Ovary (tissue), 10 donors: ENCODE measurements at regions of chr11 and their contacts with region 1.

Region 1: DNA sequence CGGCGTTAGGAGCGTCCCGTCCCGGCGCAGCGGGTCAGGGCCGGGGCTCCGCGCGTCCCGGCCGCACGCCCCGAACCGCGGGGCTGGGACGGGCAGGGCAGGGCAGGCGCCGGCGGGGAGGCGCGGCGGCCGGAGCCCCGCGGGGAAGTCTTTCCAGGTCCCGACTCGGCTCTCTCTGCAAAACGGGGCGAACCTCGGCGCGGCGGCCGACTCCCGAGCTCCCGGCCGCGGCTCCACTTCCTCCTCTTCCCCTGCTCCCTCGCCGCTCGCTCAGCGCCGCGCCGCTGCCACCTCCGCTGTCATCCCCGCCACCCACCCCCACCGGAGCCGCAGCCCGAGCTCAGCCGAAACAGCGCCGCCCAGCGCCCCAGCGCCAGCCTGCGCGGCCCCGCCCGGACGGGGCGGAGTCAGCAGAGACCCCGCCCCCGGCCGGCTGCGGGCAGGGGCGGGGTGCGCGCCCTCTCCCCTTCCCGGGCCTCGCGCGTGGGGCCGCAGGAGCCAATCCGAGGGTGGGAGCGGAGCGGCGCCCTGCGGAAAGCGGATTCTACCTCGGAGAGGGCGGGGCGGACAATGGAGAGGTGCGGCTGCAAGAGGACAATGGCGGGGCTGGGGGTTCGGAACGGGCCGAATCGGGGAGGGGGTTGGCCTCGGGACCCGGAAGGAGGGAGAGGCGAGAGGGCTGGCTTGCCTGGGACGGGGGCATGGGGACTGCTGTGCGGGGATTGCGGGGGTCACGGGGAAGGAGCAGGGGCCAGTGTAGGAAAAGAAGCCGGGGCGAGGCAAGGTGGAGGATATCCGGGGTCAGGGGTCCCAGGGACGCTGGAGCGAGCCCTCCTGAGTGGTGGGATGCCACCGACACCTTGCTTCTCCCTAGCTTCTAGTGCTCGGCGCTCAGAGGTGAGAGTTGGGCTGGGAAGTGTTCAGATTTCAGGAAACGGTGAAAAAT is at the start of gene GDPD5:
- DNase-seq: peak; percentile 80 to 89 (median 86)
- H3K4me3 ChIP-seq: peak within 1 kb of the TSS; percentile 64
- H3K27ac ChIP-seq: no peak within 1 kb of the TSS
- H3K4me1 ChIP-seq: peaks cover 3% of the 10 kb centered on the region
- H3K27me3 ChIP-seq: no peaks in the 10 kb centered on the region
- CTCF ChIP-seq: peak in 2 of 3 donors; percentile 47 to 50
- EP300 ChIP-seq: no peak
- POLR2A ChIP-seq: no peak
- total RNA-seq, gene GDPD5: 3.8 to 15.8 (median 8.4) TPM

Region 2: GRCh38 chr11:75388386-75389275 is 137.2 kb before region 1 on chr11:
- intact Hi-C with region 1: loop called in 3 of 4 experiments (anchors 5 to 10 kb)
- DNase-seq: peak; percentile 55 to 74 (median 72)
- H3K4me3 ChIP-seq: no peak overlapping the region
- H3K27ac ChIP-seq: no peak overlapping the region
- H3K4me1 ChIP-seq: no peaks in the 10 kb centered on the region
- H3K27me3 ChIP-seq: no peaks in the 10 kb centered on the region
- CTCF ChIP-seq: peak; percentile 61 to 72 (median 68)
- EP300 ChIP-seq: no peak
- POLR2A ChIP-seq: no peak

Region 3: GRCh38 chr11:75399344-75400145 is 126.3 kb before region 1 on chr11 and contains the start of gene RPS3:
- intact Hi-C with region 1: loop called in 2 of 4 experiments (anchors 5 kb)
- DNase-seq: peak; percentile 90 to 93 (median 90)
- H3K4me3 ChIP-seq: peak within 1 kb of the TSS; percentile 74
- H3K27ac ChIP-seq: peak within 1 kb of the TSS; percentile 54 to 76
- H3K4me1 ChIP-seq: peaks cover 4% of the 10 kb centered on the region
- H3K27me3 ChIP-seq: no peaks in the 10 kb centered on the region
- CTCF ChIP-seq: peak in 1 of 3 donors; percentile 27
- EP300 ChIP-seq: no peak
- POLR2A ChIP-seq: peak; percentile 88
- total RNA-seq, gene RPS3: 4,127 to 7,276 (median 5,342) TPM

Region 4: DNA sequence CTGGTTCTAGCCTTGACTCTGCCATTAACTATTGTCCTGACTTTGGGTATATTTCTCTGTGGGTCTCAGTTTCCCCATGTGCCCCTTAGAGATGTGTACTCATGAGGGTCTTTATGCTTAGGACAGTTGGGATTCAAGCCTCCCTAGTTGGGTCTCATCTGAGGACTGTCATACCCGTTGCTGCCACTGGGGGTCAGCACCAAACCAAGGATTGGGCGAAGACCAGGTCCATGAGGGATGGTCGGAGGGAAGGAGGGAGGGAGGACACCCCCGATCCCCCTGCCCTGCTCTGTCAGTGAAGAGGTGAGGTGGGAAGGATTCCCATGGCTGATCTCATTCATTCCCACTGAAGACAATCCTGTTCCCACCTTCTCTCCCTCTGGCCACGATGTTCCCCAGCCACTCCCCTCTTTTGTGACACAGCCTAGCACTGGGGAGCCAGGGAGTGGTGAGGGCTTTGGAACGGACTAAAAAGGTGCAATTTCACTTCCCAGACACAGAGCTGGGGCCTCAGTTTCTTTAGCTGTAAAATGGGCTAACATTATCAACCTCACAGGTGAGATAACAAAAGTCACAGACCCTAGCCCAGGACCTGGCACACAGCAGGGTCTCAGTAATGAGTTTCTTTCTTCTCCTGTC is 80.4 kb before region 1 on chr11:
- intact Hi-C with region 1: loop called in 3 of 4 experiments (anchors 2 kb)
- DNase-seq: peak; percentile 60 to 84 (median 81)
- H3K4me3 ChIP-seq: no peak overlapping the region
- H3K27ac ChIP-seq: no peak overlapping the region
- H3K4me1 ChIP-seq: no peaks in the 10 kb centered on the region
- H3K27me3 ChIP-seq: no peaks in the 10 kb centered on the region
- CTCF ChIP-seq: peak; percentile 84 to 97 (median 93)
- EP300 ChIP-seq: no peak
- POLR2A ChIP-seq: no peak